MCF 10A (cell line): ENCODE measurements at regions of chr4 and their contacts with region 1.

Region 1: GRCh38 chr4:118284169-118284568 is 68.6 kb downstream of the PRSS12 start:
- DNase-seq: no peak
- H3K4me3 Mint-ChIP-seq: no peak overlapping the region
- H3K27ac Mint-ChIP-seq: peak overlapping the region; percentile 11
- H3K4me1 Mint-ChIP-seq: peaks cover 41% of the 10 kb centered on the region
- H3K27me3 Mint-ChIP-seq: no peaks in the 10 kb centered on the region
- CTCF ChIP-seq: no peak

Region 2: DNA sequence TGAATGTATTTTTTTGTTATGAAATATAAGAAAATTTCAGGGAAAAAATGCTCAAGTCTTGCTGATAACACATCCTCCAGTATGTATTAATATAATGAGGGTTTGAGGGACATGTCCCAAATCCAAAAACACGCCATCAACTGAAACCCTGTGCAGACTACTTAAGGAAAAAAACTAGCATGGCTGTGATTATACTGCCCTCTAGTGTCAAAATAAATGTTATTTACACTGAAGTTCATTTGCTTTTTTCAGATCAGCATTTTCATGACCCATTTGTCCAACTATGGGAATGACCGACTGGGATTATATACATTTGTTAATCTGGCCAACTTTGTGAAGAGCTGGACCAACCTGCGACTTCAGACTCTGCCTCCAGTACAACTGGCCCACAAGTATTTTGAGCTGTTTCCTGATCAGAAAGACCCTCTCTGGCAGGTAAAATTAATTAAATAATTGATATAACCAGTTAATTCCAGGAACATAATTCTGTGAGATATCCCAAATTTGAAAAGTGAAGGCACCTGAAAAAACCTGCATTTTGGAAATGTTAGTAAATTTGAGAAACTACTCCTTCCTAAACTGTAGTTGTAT is 59.8 kb before region 1 on chr4:
- CTCF ChIA-PET with region 1: no interaction called
- POLR2A ChIA-PET with region 1: no interaction called
- intact Hi-C with region 1: no loop called
- DNase-seq: peak; percentile 75
- H3K4me3 Mint-ChIP-seq: no peak overlapping the region
- H3K27ac Mint-ChIP-seq: no peak overlapping the region
- H3K4me1 Mint-ChIP-seq: no peaks in the 10 kb centered on the region
- H3K27me3 Mint-ChIP-seq: no peaks in the 10 kb centered on the region
- CTCF ChIP-seq: peak; percentile 70

Region 3: GRCh38 chr4:118398226-118399090 is 114.3 kb after region 1 on chr4:
- CTCF ChIA-PET with region 1: interaction called, 5 read pairs
- POLR2A ChIA-PET with region 1: interaction called, 13 read pairs
- intact Hi-C with region 1: no loop called
- DNase-seq: peak; percentile 6
- H3K4me3 Mint-ChIP-seq: no peak overlapping the region
- H3K27ac Mint-ChIP-seq: peak overlapping the region; percentile 99
- H3K4me1 Mint-ChIP-seq: peaks cover 28% of the 10 kb centered on the region
- H3K27me3 Mint-ChIP-seq: no peaks in the 10 kb centered on the region
- CTCF ChIP-seq: no peak